Vagina (tissue), 2 donors: ENCODE measurements at regions of chr7 and their contacts with region 1.

Region 1: DNA sequence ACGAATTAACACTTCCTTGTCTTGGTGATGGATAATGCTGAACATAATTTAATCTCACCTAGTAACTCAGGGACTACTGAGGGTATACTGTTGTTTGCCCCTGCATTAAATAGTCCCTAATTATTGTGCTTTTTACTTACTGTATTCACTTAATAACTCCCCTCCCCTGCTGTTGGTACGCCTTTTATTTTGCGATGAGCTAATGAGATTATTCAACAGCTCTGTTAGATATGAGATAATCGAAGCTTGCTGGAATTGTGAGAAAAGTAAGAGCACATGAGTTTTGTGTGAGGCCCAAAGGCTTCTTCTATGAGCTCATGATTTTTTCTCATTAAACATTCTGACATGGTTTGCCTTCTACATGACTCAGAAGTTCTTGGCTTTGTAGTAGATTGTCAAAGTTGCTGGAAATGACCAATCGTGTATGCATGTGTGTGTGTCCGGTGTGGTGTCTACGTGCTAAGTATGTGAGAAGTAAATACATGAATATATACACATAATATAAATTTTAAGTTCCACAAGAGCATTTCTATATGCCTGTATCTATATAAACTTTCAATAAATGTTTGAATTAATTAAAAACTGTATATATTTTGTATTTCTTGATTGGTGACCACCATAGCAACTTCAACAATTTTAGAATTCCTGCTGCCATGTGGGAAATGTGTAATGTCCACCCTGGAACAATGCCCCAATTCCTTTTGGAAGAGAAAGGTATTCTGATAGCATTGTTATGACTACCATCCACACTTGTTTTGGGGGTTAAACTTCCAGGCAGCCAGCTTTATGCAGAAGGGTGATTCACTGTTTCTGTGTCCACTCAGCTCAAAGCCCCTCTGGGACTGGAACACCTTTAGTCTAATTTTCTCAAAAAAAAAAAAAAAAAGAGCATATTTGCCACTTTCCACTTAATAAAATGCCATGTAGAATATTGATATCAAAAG is 106.2 kb downstream of the SAMD9 start:
- DNase-seq: no peak
- H3K4me3 ChIP-seq: no peak overlapping the region
- H3K27ac ChIP-seq: no peak overlapping the region
- H3K4me1 ChIP-seq: peaks cover 26% of the 10 kb centered on the region
- H3K27me3 ChIP-seq: no peaks in the 10 kb centered on the region
- CTCF ChIP-seq: no peak
- POLR2A ChIP-seq: no peak

Region 2: GRCh38 chr7:92790992-92791391 is 220.6 kb before region 1 on chr7:
- intact Hi-C with region 1: loop called (anchors 5 kb)
- DNase-seq: no peak
- H3K4me3 ChIP-seq: no peak overlapping the region
- H3K27ac ChIP-seq: no peak overlapping the region
- H3K4me1 ChIP-seq: peaks cover 34% of the 10 kb centered on the region
- H3K27me3 ChIP-seq: no peaks in the 10 kb centered on the region
- CTCF ChIP-seq: no peak
- POLR2A ChIP-seq: no peak